ENCODE measurements at regions of chr2 and their contacts with region 1.

Region 1: GRCh38 chr2:233387667-233388528 is 33.6 kb downstream of the DGKD start:
- DNase-seq: no peak
- H3K4me3 ChIP-seq: no peak overlapping the region
- H3K4me3 Mint-ChIP-seq: no peak overlapping the region
- H3K27ac Mint-ChIP-seq: no peak overlapping the region
- H3K4me1 ChIP-seq: no peaks in the 10 kb centered on the region
- H3K4me1 Mint-ChIP-seq: peaks cover 19% of the 10 kb centered on the region
- H3K27me3 ChIP-seq: no peaks in the 10 kb centered on the region
- H3K27me3 Mint-ChIP-seq: no peaks in the 10 kb centered on the region
- CTCF ChIP-seq: no peak

Region 2: DNA sequence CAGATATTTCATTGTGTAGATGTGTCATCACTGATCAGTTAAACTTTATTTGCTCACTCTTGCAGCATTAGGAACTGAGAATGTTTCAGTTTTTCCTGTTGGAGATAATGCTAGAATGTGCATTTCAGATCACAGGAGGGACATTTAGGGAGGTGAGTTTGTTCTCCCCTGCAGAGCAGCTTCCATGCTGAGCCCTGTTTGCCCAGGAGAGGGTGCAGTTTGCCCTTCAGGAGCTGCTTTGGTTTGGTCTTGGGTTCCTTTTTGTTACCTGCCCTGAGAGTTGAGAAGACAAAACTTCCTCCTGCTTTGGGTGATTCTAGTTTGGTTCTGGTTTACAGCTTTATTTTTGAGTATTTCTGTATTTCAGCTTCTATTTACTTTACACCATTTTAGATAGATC is 16.3 kb after region 1 on chr2:
- CTCF ChIA-PET with region 1: interaction called, 10 read pairs
- POLR2A ChIA-PET with region 1: no interaction called
- intact Hi-C with region 1: no loop called
- DNase-seq: peak in 1 of 2 experiments; percentile 49
- H3K4me3 ChIP-seq: no peak overlapping the region
- H3K4me3 Mint-ChIP-seq: no peak overlapping the region
- H3K27ac Mint-ChIP-seq: peak overlapping the region; percentile 58
- H3K4me1 ChIP-seq: no peaks in the 10 kb centered on the region
- H3K4me1 Mint-ChIP-seq: peaks cover 20% of the 10 kb centered on the region
- H3K27me3 ChIP-seq: no peaks in the 10 kb centered on the region
- H3K27me3 Mint-ChIP-seq: no peaks in the 10 kb centered on the region
- CTCF ChIP-seq: peak; percentile 46 to 75

Region 3: DNA sequence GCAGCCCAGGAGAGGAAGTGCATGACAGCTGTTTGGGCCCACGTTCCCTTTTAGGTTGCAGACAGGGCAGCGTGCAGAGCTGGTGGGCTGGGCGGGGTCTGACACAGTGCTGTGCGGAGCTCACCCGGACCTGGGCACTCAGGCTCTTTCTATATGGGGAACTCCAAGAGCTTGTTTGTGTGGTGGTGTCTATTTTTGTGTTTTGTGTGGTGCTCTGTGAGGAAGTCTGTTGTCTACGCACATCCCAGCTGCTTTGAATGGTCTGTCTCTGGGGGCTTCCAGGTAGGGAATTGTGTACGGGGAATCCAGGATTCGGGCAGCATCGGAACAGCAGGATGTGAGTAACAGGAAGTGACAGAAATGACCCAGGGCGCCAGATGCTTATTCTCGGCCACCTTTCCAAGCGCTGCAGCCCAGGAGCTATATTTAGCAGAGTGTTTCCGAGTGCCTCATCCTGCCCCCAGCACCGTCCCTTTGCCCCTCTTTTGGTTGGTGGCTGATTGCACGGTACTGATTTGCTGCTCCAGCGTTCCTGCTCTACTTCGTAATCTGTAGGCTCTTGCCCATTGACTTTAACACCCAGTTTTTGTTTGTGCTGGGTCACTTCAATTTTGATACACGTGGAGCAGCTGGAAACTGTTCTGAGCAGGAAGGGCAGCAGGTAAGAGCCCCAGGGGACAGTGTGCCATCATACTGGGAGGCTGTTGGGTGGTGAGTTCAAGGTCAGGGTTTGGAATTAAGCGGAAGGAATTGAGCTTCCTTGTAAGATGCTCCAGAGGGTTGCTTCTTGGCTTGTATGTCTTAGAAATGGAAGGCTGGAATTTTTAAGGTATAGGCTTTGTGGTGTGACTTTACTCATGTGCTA is 31.1 kb after region 1 on chr2:
- CTCF ChIA-PET with region 1: no interaction called
- POLR2A ChIA-PET with region 1: no interaction called
- intact Hi-C with region 1: no loop called
- DNase-seq: no peak
- H3K4me3 ChIP-seq: no peak overlapping the region
- H3K4me3 Mint-ChIP-seq: no peak overlapping the region
- H3K27ac Mint-ChIP-seq: peak overlapping the region; percentile 72
- H3K4me1 ChIP-seq: peaks cover 19% of the 10 kb centered on the region
- H3K4me1 Mint-ChIP-seq: peaks cover 34% of the 10 kb centered on the region
- H3K27me3 ChIP-seq: no peaks in the 10 kb centered on the region
- H3K27me3 Mint-ChIP-seq: no peaks in the 10 kb centered on the region
- CTCF ChIP-seq: no peak

Region 4: DNA sequence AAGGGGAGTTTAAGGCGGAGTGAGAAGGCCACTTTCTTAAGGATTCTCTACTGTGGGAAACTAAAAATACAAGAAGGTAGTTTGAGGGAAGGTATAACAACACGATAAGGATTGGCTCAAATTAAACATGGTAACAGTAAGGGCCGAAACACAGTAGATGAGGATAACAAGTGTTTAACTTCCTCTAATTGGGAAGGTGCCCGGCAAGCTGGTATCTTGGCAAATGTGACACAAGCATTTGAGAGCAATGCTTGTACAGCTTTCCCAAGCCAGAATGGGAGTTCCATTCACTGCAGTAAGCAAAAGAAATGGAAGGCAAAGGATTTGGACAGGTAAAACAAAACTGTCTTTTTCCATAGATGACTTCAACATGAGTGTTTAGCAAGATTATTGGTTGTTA is 158.9 kb after region 1 on chr2:
- CTCF ChIA-PET with region 1: no interaction called
- POLR2A ChIA-PET with region 1: no interaction called
- intact Hi-C with region 1: no loop called
- DNase-seq: no peak
- H3K4me3 ChIP-seq: no peak overlapping the region
- H3K4me3 Mint-ChIP-seq: no peak overlapping the region
- H3K27ac Mint-ChIP-seq: no peak overlapping the region
- H3K4me1 ChIP-seq: no peaks in the 10 kb centered on the region
- H3K4me1 Mint-ChIP-seq: no peaks in the 10 kb centered on the region
- H3K27me3 ChIP-seq: no peaks in the 10 kb centered on the region
- H3K27me3 Mint-ChIP-seq: no peaks in the 10 kb centered on the region
- CTCF ChIP-seq: no peak

Region 5: GRCh38 chr2:234674781-234675201 is 1286.9 kb after region 1 on chr2:
- CTCF ChIA-PET with region 1: no interaction called
- POLR2A ChIA-PET with region 1: no interaction called
- intact Hi-C with region 1: no loop called
- DNase-seq: peak in 1 of 2 experiments; percentile 8
- H3K4me3 ChIP-seq: no peak overlapping the region
- H3K4me3 Mint-ChIP-seq: no peak overlapping the region
- H3K27ac Mint-ChIP-seq: peak overlapping the region; percentile 78
- H3K4me1 ChIP-seq: peaks cover 24% of the 10 kb centered on the region
- H3K4me1 Mint-ChIP-seq: peaks cover 11% of the 10 kb centered on the region
- H3K27me3 ChIP-seq: no peaks in the 10 kb centered on the region
- H3K27me3 Mint-ChIP-seq: no peaks in the 10 kb centered on the region
- CTCF ChIP-seq: no peak

Measured in Caco-2 (cell line).